A549 (cell line): ENCODE measurements at regions of chr12 and their contacts with region 1.

Region 1: GRCh38 chr12:1117970-1118563 is 127.0 kb downstream of the ERC1 start:
- DNase-seq: peak; percentile 13 to 80
- ATAC-seq: peak; percentile 64 to 75; a peak in 4 of 6 replicates
- H3K4me3 ChIP-seq: no peak overlapping the region
- H3K27ac ChIP-seq: no peak overlapping the region
- H3K4me1 ChIP-seq: no peaks in the 10 kb centered on the region
- CTCF ChIP-seq: peak; percentile 94
- EP300 ChIP-seq: no peak
- POLR2A ChIP-seq: no peak
- RAD21 ChIP-seq: peak; percentile 95 to 96

Region 2: DNA sequence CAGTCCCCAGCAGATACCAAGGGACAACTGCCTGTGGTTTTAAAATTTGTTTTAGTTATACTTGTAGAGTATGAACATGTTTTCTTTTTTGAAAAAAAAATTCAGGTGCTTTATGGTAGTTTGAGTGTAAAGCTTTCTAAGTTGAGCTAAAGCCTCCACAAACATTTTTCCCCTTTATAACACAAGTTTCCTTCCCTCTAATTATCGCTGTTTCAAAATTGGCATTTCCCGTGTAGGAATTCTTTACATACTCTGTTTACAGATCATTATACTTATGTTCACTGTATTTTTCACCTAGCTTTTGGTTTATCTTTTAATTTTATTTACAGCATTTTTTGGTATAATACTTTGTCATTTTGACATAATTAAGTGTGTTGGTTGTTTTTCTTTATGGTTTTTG is 93.0 kb before region 1 on chr12:
- CTCF ChIA-PET with region 1: no interaction called
- POLR2A ChIA-PET with region 1: no interaction called
- DNase-seq: no peak
- ATAC-seq: no peak
- H3K4me3 ChIP-seq: no peak overlapping the region
- H3K27ac ChIP-seq: no peak overlapping the region
- H3K4me1 ChIP-seq: no peaks in the 10 kb centered on the region
- CTCF ChIP-seq: no peak
- EP300 ChIP-seq: no peak
- POLR2A ChIP-seq: no peak
- RAD21 ChIP-seq: no peak

Region 3: GRCh38 chr12:1138691-1139090 is 20.6 kb after region 1 on chr12:
- CTCF ChIA-PET with region 1: interaction called, 26 read pairs
- POLR2A ChIA-PET with region 1: no interaction called
- DNase-seq: no peak
- ATAC-seq: no peak
- H3K4me3 ChIP-seq: no peak overlapping the region
- H3K27ac ChIP-seq: no peak overlapping the region
- H3K4me1 ChIP-seq: no peaks in the 10 kb centered on the region
- CTCF ChIP-seq: no peak
- EP300 ChIP-seq: no peak
- POLR2A ChIP-seq: no peak
- RAD21 ChIP-seq: no peak

Region 4: GRCh38 chr12:1544996-1545700 is 427.1 kb after region 1 on chr12:
- CTCF ChIA-PET with region 1: interaction called, 38 read pairs
- POLR2A ChIA-PET with region 1: no interaction called
- DNase-seq: peak in 1 of 2 experiments; percentile 54
- ATAC-seq: peak; percentile 62 to 70; a peak in 2 of 6 replicates
- H3K4me3 ChIP-seq: no peak overlapping the region
- H3K27ac ChIP-seq: no peak overlapping the region
- H3K4me1 ChIP-seq: peaks cover 9% of the 10 kb centered on the region; the same call in 2 of the 3 replicates
- CTCF ChIP-seq: peak; percentile 52
- EP300 ChIP-seq: no peak
- POLR2A ChIP-seq: no peak
- RAD21 ChIP-seq: peak; percentile 61 to 71

Region 5: GRCh38 chr12:1583421-1584078 is 465.5 kb after region 1 on chr12:
- CTCF ChIA-PET with region 1: interaction called, 198 read pairs
- POLR2A ChIA-PET with region 1: interaction called, 12 read pairs
- DNase-seq: peak; percentile 74 to 87
- ATAC-seq: peak; percentile 77 to 91; a peak in 5 of 6 replicates
- H3K4me3 ChIP-seq: no peak overlapping the region
- H3K27ac ChIP-seq: no peak overlapping the region
- H3K4me1 ChIP-seq: 0 out of 3 replicates have a peak, but pooled peaks cover 2% of the 10 kb centered on the region
- CTCF ChIP-seq: peak; percentile 96
- EP300 ChIP-seq: no peak
- POLR2A ChIP-seq: no peak
- RAD21 ChIP-seq: peak; percentile 97 to 98

Region 6: GRCh38 chr12:1605129-1606020 is 487.3 kb after region 1 on chr12:
- CTCF ChIA-PET with region 1: interaction called, 23 read pairs
- POLR2A ChIA-PET with region 1: no interaction called
- DNase-seq: peak; percentile 86 to 88
- ATAC-seq: peak; percentile 91 to 92
- H3K4me3 ChIP-seq: peak overlapping the region; percentile 48
- H3K27ac ChIP-seq: peak overlapping the region; percentile 63 to 83
- H3K4me1 ChIP-seq: peaks cover 24% of the 10 kb centered on the region
- CTCF ChIP-seq: peak; percentile 81
- EP300 ChIP-seq: no peak
- POLR2A ChIP-seq: no peak
- RAD21 ChIP-seq: peak; percentile 81 to 89